Activated CD4-positive, alpha-beta T cell treated with anti-CD3 and anti-CD28 coated beads for 36 hours (primary cell): ENCODE measurements at regions of chr5 and their contacts with region 1.

Region 1: DNA sequence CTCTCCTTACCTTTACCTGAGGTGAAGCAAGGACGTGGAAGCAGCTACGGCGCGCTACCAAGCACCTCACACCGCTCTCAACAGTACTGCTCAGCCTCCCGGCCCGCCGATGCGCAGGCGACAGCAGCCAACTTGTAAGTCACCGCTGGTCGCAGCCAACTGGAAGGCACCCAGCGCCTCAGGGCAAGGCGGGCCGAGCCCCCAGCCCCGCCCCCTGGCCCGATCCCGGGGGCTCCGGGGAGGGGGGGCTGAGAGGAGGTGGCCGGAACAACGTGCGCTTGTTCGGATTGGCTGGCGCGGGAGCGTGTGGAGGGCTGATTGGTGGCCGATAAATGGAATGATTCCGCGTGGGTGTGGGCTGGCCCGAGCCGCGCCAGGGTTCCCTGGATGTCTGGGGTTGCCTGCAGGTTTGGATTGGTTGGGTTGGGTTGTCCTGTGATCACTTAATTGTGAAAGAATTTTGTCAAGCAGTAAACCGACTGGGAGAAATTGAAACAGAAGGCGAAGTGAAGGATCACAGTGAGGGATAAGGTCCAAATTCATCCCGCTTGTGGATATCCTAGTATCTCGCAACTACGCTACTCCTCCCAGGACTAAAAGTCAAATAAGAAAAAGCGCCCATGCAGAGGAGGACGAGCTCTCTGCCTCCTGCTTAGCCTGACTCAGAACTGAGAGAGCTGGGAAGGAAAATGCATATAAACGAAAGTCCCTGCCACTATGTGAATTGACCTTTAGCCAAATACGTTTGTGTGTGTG is at the start of gene STARD4:
- DNase-seq: peak; percentile 97
- ATAC-seq: peak; percentile 94
- H3K4me3 Mint-ChIP-seq: peak within 1 kb of the TSS; percentile 99
- H3K27ac Mint-ChIP-seq: peak within 1 kb of the TSS; percentile 96
- H3K4me1 Mint-ChIP-seq: peaks cover 42% of the 10 kb centered on the region
- H3K27me3 Mint-ChIP-seq: no peaks in the 10 kb centered on the region
- total RNA-seq, gene STARD4: 54.2 to 55.3 TPM

Region 2: DNA sequence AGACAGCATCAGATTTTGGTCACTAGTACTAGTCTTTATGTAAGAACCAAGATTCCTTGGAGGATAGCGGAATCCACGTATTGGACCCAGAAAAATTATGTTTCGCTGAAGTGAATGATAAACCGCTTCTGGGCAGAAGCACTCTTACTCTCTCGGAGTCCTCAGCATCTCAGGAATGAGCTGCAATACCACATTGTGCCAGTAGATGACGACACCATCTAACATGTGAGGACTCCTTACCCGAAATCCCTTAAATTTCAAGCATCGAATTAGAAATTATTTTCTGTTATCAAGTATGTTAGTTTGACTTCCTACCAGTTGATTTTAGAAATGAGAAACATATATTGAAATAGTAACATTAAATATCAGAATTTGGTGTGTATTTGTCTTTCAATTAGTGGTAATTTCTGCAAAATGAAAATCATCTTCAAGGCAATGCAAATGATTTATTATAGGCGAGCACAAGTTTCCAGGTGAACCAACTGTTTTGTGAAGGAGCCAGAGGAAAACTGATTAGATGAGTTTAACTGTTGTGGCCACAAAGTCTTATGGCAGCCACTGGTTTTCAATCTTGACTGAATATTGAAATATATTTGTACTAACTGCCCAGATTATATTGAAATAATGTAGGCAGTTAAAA is 354.3 kb before region 1 on chr5:
- CTCF ChIA-PET with region 1: no interaction called
- POLR2A ChIA-PET with region 1: no interaction called
- intact Hi-C with region 1: loop called in 1 of 2 experiments (anchors 10 kb)
- DNase-seq: peak; percentile 88
- ATAC-seq: peak; percentile 67
- H3K4me3 Mint-ChIP-seq: no peak overlapping the region
- H3K27ac Mint-ChIP-seq: no peak overlapping the region
- H3K4me1 Mint-ChIP-seq: peaks cover 11% of the 10 kb centered on the region
- H3K27me3 Mint-ChIP-seq: no peaks in the 10 kb centered on the region

Region 3: DNA sequence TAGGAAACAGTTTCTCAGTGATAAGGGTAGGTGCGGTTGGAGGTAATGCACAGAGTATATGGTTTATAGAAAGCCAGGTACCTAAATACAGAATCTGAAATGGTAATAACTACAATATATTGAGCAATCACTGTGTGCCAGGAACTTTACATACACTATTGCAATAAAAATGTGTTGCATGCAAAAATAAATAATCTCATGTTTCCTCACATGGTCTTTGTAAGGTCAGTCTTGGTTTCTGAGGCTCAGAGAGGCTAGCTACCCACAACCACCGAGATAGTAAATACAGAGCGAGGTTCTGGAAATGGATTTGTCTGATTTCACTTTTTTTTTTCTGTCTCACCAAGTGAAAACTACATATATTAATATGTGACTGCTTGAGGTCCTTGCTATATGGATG is 159.5 kb before region 1 on chr5:
- CTCF ChIA-PET with region 1: no interaction called
- POLR2A ChIA-PET with region 1: no interaction called
- intact Hi-C with region 1: no loop called
- DNase-seq: no peak
- ATAC-seq: no peak
- H3K4me3 Mint-ChIP-seq: no peak overlapping the region
- H3K27ac Mint-ChIP-seq: no peak overlapping the region
- H3K4me1 Mint-ChIP-seq: peaks cover 35% of the 10 kb centered on the region
- H3K27me3 Mint-ChIP-seq: no peaks in the 10 kb centered on the region

Region 4: DNA sequence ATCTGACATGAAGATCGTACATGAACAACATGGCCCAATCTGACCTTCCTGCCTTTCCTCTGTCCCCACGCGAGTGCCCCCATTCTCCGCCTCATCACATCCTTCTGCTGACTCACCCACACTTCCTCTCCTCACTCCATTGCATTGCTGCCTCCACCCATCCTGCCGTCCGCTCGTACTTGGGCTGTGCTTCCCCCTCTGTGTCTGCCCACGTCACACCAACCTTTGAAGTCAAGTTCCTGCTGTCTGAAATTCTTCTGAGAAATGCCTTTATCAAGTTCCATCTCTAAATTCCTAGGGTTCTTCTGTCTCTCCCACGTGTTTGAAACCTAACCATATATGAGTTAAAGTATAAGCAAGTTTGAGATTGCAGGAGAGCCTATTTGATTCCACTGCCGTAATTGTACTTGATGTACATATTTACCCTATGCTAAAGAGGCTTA is 17.8 kb after region 1 on chr5:
- CTCF ChIA-PET with region 1: interaction called, 12 read pairs
- POLR2A ChIA-PET with region 1: no interaction called
- intact Hi-C with region 1: loop called (anchors 1 kb)
- DNase-seq: peak; percentile 87
- ATAC-seq: peak; percentile 100
- H3K4me3 Mint-ChIP-seq: peak overlapping the region; percentile 50
- H3K27ac Mint-ChIP-seq: peak overlapping the region; percentile 84
- H3K4me1 Mint-ChIP-seq: peaks cover 19% of the 10 kb centered on the region
- H3K27me3 Mint-ChIP-seq: no peaks in the 10 kb centered on the region

Region 5: GRCh38 chr5:111757355-111758283 is 245.1 kb after region 1 on chr5:
- CTCF ChIA-PET with region 1: no interaction called
- POLR2A ChIA-PET with region 1: interaction called, 8 read pairs
- intact Hi-C with region 1: loop called (anchors 1 to 5 kb)
- DNase-seq: peak; percentile 91
- ATAC-seq: peak; percentile 78
- H3K4me3 Mint-ChIP-seq: peak overlapping the region; percentile 80
- H3K27ac Mint-ChIP-seq: peak overlapping the region; percentile 86
- H3K4me1 Mint-ChIP-seq: peaks cover 18% of the 10 kb centered on the region
- H3K27me3 Mint-ChIP-seq: peaks cover 3% of the 10 kb centered on the region